PC-3 (cell line): ENCODE measurements at regions of chr6 and their contacts with region 1.

Region 1: GRCh38 chr6:136547336-136547735 is 2.9 kb downstream of the MAP7 start:
- DNase-seq: peak; percentile 65
- ATAC-seq: no peak
- H3K4me3 ChIP-seq: no peak overlapping the region
- H3K27ac ChIP-seq: no peak overlapping the region; the same call in 1 of the 2 replicates
- H3K4me1 ChIP-seq: peaks cover 23% of the 10 kb centered on the region
- H3K27me3 ChIP-seq: no peaks in the 10 kb centered on the region
- CTCF ChIP-seq: peak; percentile 67

Region 2: GRCh38 chr6:136249811-136250685 is 297.3 kb before region 1 on chr6 and contains the start of gene MTFR2:
- CTCF ChIA-PET with region 1: no interaction called
- POLR2A ChIA-PET with region 1: no interaction called
- intact Hi-C with region 1: loop called (anchors 10 kb)
- DNase-seq: peak; percentile 98
- ATAC-seq: peak; percentile 87
- H3K4me3 ChIP-seq: peak within 1 kb of the TSS; percentile 87
- H3K27ac ChIP-seq: peak within 1 kb of the TSS; percentile 49
- H3K4me1 ChIP-seq: peaks cover 16% of the 10 kb centered on the region; the same call in 1 of the 2 replicates
- H3K27me3 ChIP-seq: no peaks in the 10 kb centered on the region
- CTCF ChIP-seq: no peak
- total RNA-seq, gene MTFR2: 6.2 and 12.4 TPM in 2 replicates

Region 3: GRCh38 chr6:136378886-136379285 is 168.4 kb before region 1 on chr6:
- CTCF ChIA-PET with region 1: interaction called, 8 read pairs
- POLR2A ChIA-PET with region 1: no interaction called
- intact Hi-C with region 1: loop called (anchors 1 kb)
- DNase-seq: peak; percentile 18
- ATAC-seq: peak; percentile 55
- H3K4me3 ChIP-seq: no peak overlapping the region
- H3K27ac ChIP-seq: no peak overlapping the region
- H3K4me1 ChIP-seq: no peaks in the 10 kb centered on the region
- H3K27me3 ChIP-seq: no peaks in the 10 kb centered on the region
- CTCF ChIP-seq: peak; percentile 52; the same call in 1 of the 2 replicates

Region 4: DNA sequence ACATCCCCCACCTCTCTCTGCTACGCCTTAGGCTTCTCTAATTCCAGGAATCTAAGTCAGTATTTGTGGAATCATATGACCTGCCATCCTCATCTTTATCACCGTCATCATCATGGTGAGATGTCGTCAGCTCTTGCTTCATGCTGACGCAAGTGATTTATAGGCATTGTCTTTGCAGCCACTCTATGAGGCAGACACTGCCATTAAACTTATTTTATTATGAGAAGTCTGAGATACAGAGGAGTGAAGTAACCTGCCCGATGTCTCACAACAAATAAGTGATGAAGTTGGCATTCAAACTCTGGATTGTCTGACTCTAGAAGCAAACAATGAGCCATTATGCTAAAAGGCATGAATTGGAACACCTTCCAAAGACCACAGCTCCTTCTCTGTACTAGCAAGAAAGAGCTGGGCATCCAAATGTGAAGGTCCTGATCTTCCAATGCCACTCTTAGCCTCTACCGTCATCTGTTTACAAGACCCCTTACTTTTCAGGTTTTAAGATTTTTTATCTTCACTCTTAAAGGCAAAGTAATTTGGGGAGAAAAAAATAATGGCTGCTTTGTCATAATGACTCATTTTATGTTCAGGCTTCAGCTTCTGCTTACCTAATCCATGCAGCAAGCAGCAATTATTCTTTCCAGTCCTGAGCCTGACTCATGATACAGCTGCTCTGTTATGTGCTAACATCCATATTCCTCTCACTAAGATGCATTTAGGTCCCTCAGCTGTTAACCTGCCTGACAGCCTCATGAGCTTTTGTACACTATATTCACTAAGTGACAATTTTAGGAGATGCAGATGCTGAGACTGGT is 144.0 kb before region 1 on chr6:
- CTCF ChIA-PET with region 1: interaction called, 4 read pairs
- POLR2A ChIA-PET with region 1: no interaction called
- intact Hi-C with region 1: loop called (anchors 10 kb)
- DNase-seq: peak; percentile 88
- ATAC-seq: peak; percentile 91
- H3K4me3 ChIP-seq: no peak overlapping the region
- H3K27ac ChIP-seq: peak overlapping the region; percentile 99
- H3K4me1 ChIP-seq: peaks cover 52% of the 10 kb centered on the region
- H3K27me3 ChIP-seq: no peaks in the 10 kb centered on the region
- CTCF ChIP-seq: no peak

Region 5: GRCh38 chr6:136579800-136580199 is 32.5 kb after region 1 on chr6:
- CTCF ChIA-PET with region 1: no interaction called
- POLR2A ChIA-PET with region 1: no interaction called
- intact Hi-C with region 1: no loop called
- DNase-seq: no peak
- ATAC-seq: no peak
- H3K4me3 ChIP-seq: no peak overlapping the region
- H3K27ac ChIP-seq: no peak overlapping the region
- H3K4me1 ChIP-seq: peaks cover 6% of the 10 kb centered on the region
- H3K27me3 ChIP-seq: no peaks in the 10 kb centered on the region
- CTCF ChIP-seq: no peak

Region 6: DNA sequence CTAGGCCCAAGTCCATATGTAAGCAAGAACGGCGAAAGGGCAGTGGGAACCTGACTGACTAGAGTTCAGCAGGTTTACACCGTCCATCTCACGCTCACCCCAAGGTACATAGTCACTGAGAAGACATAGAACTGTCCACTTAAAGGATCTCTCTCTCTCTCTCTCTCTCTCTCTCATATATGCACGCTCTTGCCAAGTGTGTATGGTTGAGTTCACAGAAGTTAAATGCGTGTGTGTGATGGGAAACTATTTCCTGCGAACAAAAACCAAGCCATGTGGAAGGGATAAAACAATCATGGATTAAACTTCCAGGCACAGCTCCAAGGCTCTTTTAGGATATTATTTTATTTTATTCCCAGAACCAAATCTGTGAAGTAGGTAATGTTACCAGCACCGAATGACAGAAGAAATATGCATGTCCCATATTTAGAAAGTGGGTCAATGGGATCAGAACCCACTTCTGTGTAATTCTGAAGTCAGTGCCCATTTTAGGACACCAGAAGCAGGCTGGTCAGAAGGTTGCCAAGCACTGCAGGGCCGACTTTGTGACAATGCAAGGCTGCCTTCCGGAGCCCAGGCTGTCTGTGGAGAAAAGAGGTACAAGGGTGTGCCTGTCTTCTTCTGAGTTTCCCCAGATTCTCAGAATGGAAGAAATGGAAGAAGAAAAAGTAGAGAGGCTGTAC is 52.1 kb after region 1 on chr6:
- CTCF ChIA-PET with region 1: no interaction called
- POLR2A ChIA-PET with region 1: no interaction called
- intact Hi-C with region 1: no loop called
- DNase-seq: no peak
- ATAC-seq: no peak
- H3K4me3 ChIP-seq: no peak overlapping the region
- H3K27ac ChIP-seq: no peak overlapping the region
- H3K4me1 ChIP-seq: peaks cover 3% of the 10 kb centered on the region; the same call in 1 of the 2 replicates
- H3K27me3 ChIP-seq: no peaks in the 10 kb centered on the region
- CTCF ChIP-seq: no peak

Region 7: GRCh38 chr6:136696238-136696637 is 148.9 kb after region 1 on chr6:
- CTCF ChIA-PET with region 1: no interaction called
- POLR2A ChIA-PET with region 1: no interaction called
- intact Hi-C with region 1: no loop called
- DNase-seq: no peak
- ATAC-seq: no peak
- H3K4me3 ChIP-seq: no peak overlapping the region
- H3K27ac ChIP-seq: no peak overlapping the region
- H3K4me1 ChIP-seq: peaks cover 7% of the 10 kb centered on the region
- H3K27me3 ChIP-seq: no peaks in the 10 kb centered on the region
- CTCF ChIP-seq: no peak